Cardiac septum (tissue), 1 donor: ENCODE measurements at regions of chr12 and their contacts with region 1.

Region 1: GRCh38 chr12:123519141-123520001 is 14.1 kb downstream of the RILPL1 start:
- DNase-seq: peak; percentile 85

Region 2: GRCh38 chr12:123478762-123479161 is 40.6 kb before region 1 on chr12:
- intact Hi-C with region 1: loop called (anchors 1 kb)
- DNase-seq: peak; percentile 89